ENCODE measurements at regions of chr10 and their contacts with region 1.

Region 1: DNA sequence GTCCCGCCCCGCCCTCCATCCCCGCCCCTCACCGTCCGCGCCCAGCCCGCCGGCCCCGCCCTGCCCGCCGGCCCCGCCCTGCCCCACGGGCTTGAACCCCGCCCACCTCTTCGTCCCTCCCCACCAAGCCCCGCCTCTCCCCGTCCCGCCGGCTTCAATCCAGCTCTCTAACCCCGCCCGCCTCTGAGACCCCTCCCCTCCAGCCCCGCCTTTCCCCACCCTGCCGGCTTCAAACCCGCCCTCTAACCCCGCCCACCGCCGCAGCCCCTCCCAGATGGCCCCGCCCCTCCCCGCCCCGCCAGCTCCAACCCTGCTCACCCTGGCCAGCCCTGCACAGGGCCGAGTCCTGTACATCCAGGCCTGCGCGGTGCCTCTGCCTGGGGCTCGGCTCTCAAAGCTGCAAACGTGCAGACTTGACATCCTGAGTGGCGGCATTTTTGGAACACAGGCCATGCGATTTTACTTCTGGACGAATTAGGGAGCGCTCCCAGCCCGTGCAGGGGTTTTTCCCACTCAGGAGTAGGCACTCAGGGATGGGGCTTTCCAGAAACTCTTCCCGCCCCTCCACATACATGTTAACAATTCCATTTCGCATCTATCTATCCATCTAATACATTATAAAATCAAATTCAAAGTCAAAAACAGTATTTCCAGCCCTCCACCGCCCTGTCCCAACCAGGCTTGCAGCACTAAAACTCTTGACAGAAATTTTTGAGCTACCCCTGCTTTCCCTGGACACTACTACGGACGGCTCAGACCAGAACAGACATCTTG is 475 bp upstream of the NMT2 start:
- DNase-seq: peak; percentile 69 to 96
- H3K4me3 ChIP-seq: peak overlapping the region in 1 of 2 donors; percentile 36
- H3K27ac ChIP-seq: peak overlapping the region in 1 of 2 donors; percentile 15
- H3K4me1 ChIP-seq: no peaks in the 10 kb centered on the region
- H3K27me3 ChIP-seq: no peaks in the 10 kb centered on the region
- CTCF ChIP-seq: no peak

Region 2: GRCh38 chr10:13160934-13161856 is 2007.8 kb before region 1 on chr10 and contains the start of gene MCM10:
- intact Hi-C with region 1: loop called (anchors 10 kb)
- DNase-seq: peak; percentile 92 to 99
- H3K4me3 ChIP-seq: peak within 1 kb of the TSS; percentile 29 to 68
- H3K27ac ChIP-seq: no peak within 1 kb of the TSS
- H3K4me1 ChIP-seq: peaks cover 4 to 10% of the 10 kb centered on the region in 2 donors
- H3K27me3 ChIP-seq: no peaks in the 10 kb centered on the region
- CTCF ChIP-seq: peak; percentile 73 to 90 (median 85)
- total RNA-seq, gene MCM10: 0.11 TPM

Region 3: GRCh38 chr10:14878266-14879054 is 290.5 kb before region 1 on chr10 and contains the start of gene SUV39H2:
- intact Hi-C with region 1: loop called (anchors 2 kb)
- DNase-seq: peak; percentile 86 to 97
- H3K4me3 ChIP-seq: peak within 1 kb of the TSS; percentile 79 to 92
- H3K27ac ChIP-seq: peak within 1 kb of the TSS; percentile 85 to 92
- H3K4me1 ChIP-seq: peaks cover 0 to 4% of the 10 kb centered on the region in 2 donors
- H3K27me3 ChIP-seq: no peaks in the 10 kb centered on the region
- CTCF ChIP-seq: no peak
- total RNA-seq, gene SUV39H2: not detected

Region 4: GRCh38 chr10:14954001-14954770 is 214.8 kb before region 1 on chr10 and contains the start of gene DCLRE1C:
- intact Hi-C with region 1: loop called (anchors 1 kb)
- DNase-seq: peak; percentile 53 to 94
- H3K4me3 ChIP-seq: peak within 1 kb of the TSS; percentile 87 to 92
- H3K27ac ChIP-seq: peak within 1 kb of the TSS; percentile 89 to 91
- H3K4me1 ChIP-seq: peaks cover 4 to 11% of the 10 kb centered on the region in 2 donors
- H3K27me3 ChIP-seq: no peaks in the 10 kb centered on the region
- CTCF ChIP-seq: no peak
- total RNA-seq, gene DCLRE1C: 8.6 TPM

Region 5: GRCh38 chr10:15035385-15036301 is 133.3 kb before region 1 on chr10:
- intact Hi-C with region 1: no loop called
- DNase-seq: no peak
- H3K4me3 ChIP-seq: no peak overlapping the region
- H3K27ac ChIP-seq: no peak overlapping the region
- H3K4me1 ChIP-seq: no peaks in the 10 kb centered on the region
- H3K27me3 ChIP-seq: no peaks in the 10 kb centered on the region
- CTCF ChIP-seq: no peak

Region 6: DNA sequence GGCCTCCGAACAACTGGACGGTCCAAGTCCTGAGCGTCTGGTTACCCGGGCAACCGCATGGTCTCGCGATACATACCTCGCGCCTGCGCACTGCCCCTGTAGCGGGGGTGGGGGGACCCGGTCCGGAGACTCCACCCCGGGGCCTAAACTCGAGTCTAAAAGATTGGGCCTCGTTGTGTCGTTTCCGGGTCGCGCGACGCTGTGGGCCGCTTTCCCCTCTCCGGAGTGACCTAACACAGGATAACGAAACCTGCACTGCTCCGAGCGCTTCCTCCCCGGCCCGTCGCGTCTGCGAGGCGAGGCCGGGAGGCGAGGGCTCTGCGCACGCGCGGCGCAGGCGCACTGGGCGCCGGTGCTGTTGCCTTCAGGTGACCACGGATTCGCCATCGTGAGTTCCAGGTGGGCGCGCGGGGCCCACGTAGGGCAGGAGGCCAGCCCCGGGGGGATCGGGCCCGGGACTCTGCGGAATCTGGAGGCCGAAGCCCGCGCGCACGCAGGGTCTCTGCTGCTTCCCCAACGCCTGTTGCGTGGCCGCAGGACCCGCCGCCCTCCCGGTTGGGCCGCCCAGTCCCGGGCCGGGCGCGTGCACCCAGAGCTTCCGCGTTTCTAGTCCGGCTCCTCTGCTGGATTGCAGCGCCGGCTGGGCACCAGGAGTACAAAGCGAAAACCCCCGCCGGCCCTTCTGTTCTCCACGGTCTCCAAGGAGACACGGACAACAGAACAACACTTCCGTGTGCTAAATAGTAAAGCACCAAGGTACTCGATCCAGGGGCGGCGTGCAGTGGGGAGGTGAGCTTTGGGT is 71.8 kb before region 1 on chr10 and contains the start of gene RPP38:
- intact Hi-C with region 1: loop called (anchors 5 kb)
- DNase-seq: peak; percentile 78 to 97
- H3K4me3 ChIP-seq: peak within 1 kb of the TSS; percentile 72 to 97
- H3K27ac ChIP-seq: peak within 1 kb of the TSS; percentile 85 to 97
- H3K4me1 ChIP-seq: peaks cover 6 to 22% of the 10 kb centered on the region in 2 donors
- H3K27me3 ChIP-seq: no peaks in the 10 kb centered on the region
- CTCF ChIP-seq: no peak
- total RNA-seq, gene RPP38: not detected

Region 7: DNA sequence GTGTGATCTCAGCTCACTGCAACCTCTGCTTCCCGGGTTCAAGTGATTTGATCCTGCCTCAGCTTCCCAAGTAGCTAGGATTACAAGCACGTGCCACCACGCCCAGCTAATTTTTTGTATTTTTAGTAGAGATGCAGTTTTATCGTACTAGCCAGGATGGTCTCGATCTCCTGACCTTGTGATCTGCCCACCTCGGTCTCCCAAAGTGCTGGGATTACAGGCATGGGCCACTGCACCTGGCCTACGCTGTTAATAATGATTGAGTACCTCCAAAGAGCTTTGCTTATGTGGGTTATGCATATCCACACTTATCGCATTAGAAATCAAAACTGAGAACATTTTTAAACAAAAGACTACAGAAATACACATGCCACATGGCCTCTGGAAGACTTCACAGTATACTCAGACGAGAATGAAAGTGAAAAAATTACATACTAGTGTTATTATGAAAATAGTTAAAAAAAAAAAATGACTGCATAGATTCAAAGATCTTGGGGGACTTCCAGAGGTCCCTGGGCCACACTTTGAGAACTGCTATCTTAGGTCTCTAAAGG is 46.4 kb before region 1 on chr10:
- intact Hi-C with region 1: no loop called
- DNase-seq: no peak
- H3K4me3 ChIP-seq: no peak overlapping the region
- H3K27ac ChIP-seq: no peak overlapping the region
- H3K4me1 ChIP-seq: no peaks in the 10 kb centered on the region
- H3K27me3 ChIP-seq: no peaks in the 10 kb centered on the region
- CTCF ChIP-seq: no peak

Region 8: DNA sequence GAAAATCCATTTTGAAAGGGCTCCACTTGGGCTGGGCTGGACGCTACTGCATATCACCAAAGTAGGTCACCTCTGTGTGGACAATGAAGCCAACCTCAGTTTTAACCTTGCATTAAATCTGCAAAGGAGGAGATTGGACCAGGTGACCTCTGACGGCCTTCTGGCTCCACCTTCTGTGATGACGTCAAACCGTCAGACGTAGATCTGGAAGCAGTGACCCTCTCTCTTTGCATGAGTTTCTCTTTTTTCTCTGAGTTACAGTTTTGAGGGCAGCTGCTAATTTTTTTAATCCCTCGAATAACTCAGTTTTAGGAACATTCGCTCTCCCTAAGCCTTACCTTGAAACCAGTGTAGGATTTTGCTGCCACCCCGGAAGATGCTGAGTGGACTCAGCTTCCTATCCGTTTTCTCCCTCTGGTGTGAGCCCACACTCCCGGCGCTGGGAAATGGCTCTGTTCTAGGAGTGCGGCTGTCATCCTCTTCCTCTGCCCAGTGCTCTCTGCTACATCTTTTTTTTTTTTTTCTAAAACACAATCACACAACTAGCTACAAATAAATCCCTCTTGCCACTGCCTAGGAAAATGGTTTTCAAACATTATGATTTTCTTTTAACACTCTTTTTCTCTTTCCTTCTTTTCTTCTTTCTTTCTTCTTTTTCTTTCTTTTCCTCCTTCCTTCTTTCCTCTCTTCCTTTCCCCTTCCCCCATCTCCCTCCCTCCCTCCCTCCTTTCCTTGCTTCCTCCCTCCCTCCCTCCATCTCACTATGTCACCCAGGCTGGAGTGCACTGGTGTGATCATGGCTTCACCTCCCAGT is 27.3 kb after region 1 on chr10:
- intact Hi-C with region 1: no loop called
- DNase-seq: no peak
- H3K4me3 ChIP-seq: no peak overlapping the region
- H3K27ac ChIP-seq: no peak overlapping the region
- H3K4me1 ChIP-seq: no peaks in the 10 kb centered on the region
- H3K27me3 ChIP-seq: no peaks in the 10 kb centered on the region
- CTCF ChIP-seq: no peak

Region 9: DNA sequence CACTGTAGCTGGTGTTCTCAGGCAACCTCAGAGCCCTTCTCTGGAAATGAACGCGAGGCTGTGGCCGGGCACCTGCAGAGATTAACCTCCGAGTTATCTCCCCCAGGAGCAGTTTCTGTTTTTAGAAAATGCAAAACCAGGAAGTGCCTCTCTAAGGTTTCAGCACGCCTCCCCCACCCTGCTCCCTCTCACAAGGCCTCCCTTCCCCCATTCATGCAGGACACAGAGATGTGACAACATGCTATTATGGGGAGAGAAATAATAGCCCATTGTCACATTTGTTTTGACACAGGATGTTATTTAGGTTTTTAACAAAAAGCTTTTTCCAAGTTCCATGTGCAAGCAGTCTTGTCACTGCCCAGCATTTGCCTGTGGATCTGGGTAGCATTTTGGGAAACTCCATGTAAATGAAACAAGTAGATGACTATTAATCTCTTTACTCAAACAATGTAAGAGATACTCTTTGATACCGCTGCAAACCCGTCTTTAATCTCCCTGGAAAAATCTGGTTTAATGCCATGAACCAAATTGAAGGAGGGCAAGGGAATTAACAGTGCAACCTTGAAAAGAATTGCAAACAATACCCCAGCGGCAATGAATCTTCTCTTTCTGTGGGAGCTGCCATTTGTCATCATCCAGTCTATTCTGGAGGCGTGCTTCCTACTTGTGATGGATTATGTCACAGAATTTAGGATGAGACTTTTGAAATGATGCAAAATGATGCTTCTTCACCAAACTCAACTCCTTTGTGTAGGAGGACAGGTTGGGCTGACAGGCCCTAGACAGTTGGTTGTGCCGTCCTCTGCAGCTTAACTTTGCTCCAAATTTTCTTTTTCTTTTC is 86.1 kb after region 1 on chr10:
- intact Hi-C with region 1: no loop called
- DNase-seq: no peak
- H3K4me3 ChIP-seq: no peak overlapping the region
- H3K27ac ChIP-seq: no peak overlapping the region
- H3K4me1 ChIP-seq: no peaks in the 10 kb centered on the region
- H3K27me3 ChIP-seq: no peaks in the 10 kb centered on the region
- CTCF ChIP-seq: no peak

Region 10: GRCh38 chr10:15370856-15371701 is 202.1 kb after region 1 on chr10 and contains the start of gene FAM171A1:
- intact Hi-C with region 1: loop called (anchors 5 kb)
- DNase-seq: peak in 1 of 2 donors; percentile 66
- H3K4me3 ChIP-seq: peak within 1 kb of the TSS; percentile 78 to 79
- H3K27ac ChIP-seq: peak within 1 kb of the TSS in 1 of 2 donors; percentile 19
- H3K4me1 ChIP-seq: peaks cover 0 to 4% of the 10 kb centered on the region in 2 donors
- H3K27me3 ChIP-seq: no peaks in the 10 kb centered on the region
- CTCF ChIP-seq: peak in 2 of 3 experiments; percentile 6 to 8
- total RNA-seq, gene FAM171A1: 27.7 TPM

Region 11: GRCh38 chr10:16436758-16437539 is 1268.0 kb after region 1 on chr10 and contains the start of gene PTER:
- intact Hi-C with region 1: loop called (anchors 10 kb)
- DNase-seq: peak; percentile 91 to 98
- H3K4me3 ChIP-seq: peak within 1 kb of the TSS; percentile 70 to 88
- H3K27ac ChIP-seq: peak within 1 kb of the TSS; percentile 82
- H3K4me1 ChIP-seq: peaks cover 0 to 16% of the 10 kb centered on the region in 2 donors
- H3K27me3 ChIP-seq: no peaks in the 10 kb centered on the region
- CTCF ChIP-seq: no peak
- total RNA-seq, gene PTER: 2.6 TPM

Measured in ascending aorta (tissue), 2 donors.